OCI-LY7 (cell line): ENCODE measurements at regions of chr16 and their contacts with region 1.

Region 1: DNA sequence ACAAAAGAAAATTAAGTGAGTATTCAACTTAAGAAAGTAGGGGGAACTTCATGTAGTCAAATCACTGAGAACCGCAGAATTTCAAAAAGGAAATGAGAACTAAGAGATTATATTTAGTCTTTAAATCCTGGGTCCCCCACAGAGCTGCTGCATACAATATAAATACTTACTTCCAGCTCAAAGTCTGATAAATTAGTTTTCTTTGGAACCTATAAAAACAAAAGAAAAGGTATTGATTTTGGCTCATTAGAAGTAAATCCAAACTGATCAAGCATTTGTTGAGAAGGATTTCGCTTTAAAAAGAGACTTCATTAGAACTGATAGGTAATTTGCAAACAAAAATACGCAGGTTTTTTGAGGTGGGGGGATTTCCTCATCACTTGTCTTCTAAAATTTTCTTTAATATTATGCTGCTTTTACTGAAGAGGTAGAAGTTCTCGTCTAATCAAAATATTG is 21.9 kb downstream of the PARN start:
- DNase-seq: peak; percentile 64
- H3K4me3 ChIP-seq: peak overlapping the region; percentile 64
- H3K27ac ChIP-seq: peak overlapping the region; percentile 96
- H3K4me1 ChIP-seq: peaks cover 71% of the 10 kb centered on the region
- CTCF ChIP-seq: no peak

Region 2: DNA sequence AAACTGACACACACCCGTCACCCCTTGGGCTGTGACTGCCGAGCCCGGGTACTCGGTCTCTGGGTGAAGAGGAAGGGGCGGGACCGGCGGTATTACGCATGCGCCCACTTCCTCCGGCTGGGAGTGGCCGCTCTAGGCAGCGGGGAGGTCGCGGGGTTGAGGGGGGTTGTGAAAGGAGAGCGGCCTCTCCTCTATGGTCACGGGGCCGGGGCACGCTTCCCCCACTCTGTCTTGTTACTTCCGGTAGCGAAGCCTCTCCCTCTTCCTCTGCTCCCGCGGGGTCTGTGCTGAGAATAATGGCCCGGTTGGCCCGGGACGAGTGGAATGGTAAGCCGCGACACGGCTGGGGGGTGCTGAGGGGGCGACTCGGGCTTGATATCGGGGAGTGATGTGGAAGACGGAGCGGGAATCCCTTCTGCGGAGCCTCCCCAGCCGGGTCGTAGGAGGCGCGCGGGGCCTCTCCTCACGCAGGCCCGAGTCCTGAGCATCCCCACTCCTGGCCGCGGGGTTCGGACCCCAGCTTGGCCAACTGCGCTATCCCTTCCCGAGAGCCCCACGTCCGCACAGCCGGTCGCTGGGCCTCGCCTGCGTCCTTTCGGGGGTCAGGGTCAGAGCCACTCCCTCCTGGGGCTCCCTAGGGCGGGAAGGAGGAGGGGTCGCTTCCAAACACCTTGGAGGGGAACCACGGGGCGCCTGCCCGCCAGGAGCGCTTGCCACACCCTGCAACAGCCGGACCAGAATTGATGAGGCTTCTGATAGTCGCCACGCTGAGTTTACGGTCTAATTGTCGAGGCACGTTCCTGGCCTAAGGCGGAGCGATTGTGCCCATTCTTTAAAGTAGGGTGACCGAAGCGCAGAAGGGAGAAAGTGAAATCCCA is 24.8 kb after region 1 on chr16 and contains the start of gene BFAR:
- CTCF ChIA-PET with region 1: no interaction called
- POLR2A ChIA-PET with region 1: interaction called, 16 read pairs
- intact Hi-C with region 1: loop called (anchors 1 kb)
- DNase-seq: peak; percentile 98
- H3K4me3 ChIP-seq: peak within 1 kb of the TSS; percentile 98
- H3K27ac ChIP-seq: peak within 1 kb of the TSS; percentile 79
- H3K4me1 ChIP-seq: peaks cover 40% of the 10 kb centered on the region
- CTCF ChIP-seq: no peak
- total RNA-seq, gene BFAR: 34.4 and 36.7 TPM in 2 replicates

Region 3: GRCh38 chr16:14672403-14672971 is 64.3 kb after region 1 on chr16:
- CTCF ChIA-PET with region 1: no interaction called
- POLR2A ChIA-PET with region 1: interaction called, 3 read pairs
- intact Hi-C with region 1: loop called (anchors 1 kb)
- DNase-seq: peak; percentile 90
- H3K4me3 ChIP-seq: peak overlapping the region; percentile 55
- H3K27ac ChIP-seq: peak overlapping the region; percentile 90
- H3K4me1 ChIP-seq: peaks cover 29% of the 10 kb centered on the region
- CTCF ChIP-seq: no peak